Left ventricle myocardium superior (tissue), 1 donor: ENCODE measurements at regions of chr6 and their contacts with region 1.

Region 1: DNA sequence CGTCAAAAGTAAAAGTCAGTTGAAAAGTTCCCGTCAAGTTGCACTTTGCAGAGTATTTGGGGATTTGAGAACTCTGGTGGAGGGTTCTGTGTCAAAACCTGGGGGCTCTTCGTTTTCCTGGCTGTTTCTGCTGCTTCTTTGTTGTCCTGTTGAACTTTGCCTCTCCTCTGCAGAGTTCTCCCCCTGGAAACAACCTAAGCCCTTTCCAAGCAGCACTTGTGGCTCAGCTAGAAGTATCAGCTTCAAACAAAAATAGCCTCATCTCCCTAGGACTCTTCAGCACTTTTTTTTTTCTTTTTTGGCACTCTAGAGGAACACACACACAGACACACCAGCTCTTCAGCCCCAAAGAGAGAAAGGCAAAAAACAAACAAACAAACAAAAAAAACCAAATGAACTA is at the start of gene TRDN:
- DNase-seq: no peak
- ATAC-seq: peak; percentile 91
- total RNA-seq, gene TRDN: 470 TPM

Region 2: GRCh38 chr6:123519191-123519510 is 117.6 kb before region 1 on chr6:
- intact Hi-C with region 1: loop called (anchors 10 kb)
- DNase-seq: peak; percentile 85
- ATAC-seq: peak; percentile 94

Region 3: GRCh38 chr6:123681957-123682462 is 45.2 kb after region 1 on chr6:
- intact Hi-C with region 1: no loop called
- DNase-seq: no peak
- ATAC-seq: no peak